B cell (primary cell): ENCODE measurements at regions of chr5 and their contacts with region 1.

Region 1: DNA sequence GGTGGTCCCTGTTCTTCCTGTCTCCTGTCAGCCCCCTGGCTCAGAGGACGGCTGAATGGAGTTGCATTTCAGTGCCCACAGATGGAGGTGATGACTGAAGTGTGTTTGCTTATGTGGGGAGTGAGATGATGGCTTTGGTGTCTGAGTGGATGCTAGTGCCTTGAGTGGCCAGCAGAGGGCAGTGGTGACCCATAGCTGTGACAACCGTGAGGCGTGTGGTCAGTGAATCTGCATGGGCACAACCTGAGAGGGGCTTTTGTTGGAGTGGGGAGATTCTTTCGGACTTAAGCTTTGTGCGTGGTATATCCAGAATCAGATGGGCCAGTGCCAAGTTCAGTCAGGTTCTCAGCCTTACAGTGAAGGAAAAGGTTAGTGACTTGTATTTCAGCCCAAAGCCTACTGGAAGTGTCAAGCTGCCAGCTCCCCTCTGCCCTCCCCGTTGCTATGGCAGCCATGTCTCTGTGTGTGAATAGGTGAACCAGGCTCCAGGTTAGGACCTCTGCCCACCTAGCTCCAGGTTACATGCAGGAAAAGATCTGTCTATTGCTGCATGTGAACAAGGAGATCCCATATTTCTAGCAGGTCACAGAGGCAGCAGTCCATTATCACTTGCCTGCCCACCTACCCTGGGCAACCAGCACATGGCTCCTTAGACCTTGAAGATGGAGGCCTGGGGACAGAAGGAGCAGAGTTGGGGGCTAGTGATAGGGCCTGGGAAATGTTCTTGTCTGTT is 14.7 kb upstream of the CXXC5 start:
- DNase-seq: peak; percentile 87
- ATAC-seq: peak; percentile 14
- H3K4me3 ChIP-seq: no peak overlapping the region
- H3K4me3 Mint-ChIP-seq: peak overlapping the region; percentile 17
- H3K27ac ChIP-seq: peak overlapping the region; percentile 88 to 93
- H3K27ac Mint-ChIP-seq: peak overlapping the region; percentile 61
- H3K4me1 ChIP-seq: peaks cover 44 to 59% of the 10 kb centered on the region in 2 donors
- H3K4me1 Mint-ChIP-seq: peaks cover 54% of the 10 kb centered on the region
- H3K27me3 ChIP-seq: no peaks in the 10 kb centered on the region
- H3K27me3 Mint-ChIP-seq: no peaks in the 10 kb centered on the region
- CTCF ChIP-seq: peak; percentile 96

Region 2: DNA sequence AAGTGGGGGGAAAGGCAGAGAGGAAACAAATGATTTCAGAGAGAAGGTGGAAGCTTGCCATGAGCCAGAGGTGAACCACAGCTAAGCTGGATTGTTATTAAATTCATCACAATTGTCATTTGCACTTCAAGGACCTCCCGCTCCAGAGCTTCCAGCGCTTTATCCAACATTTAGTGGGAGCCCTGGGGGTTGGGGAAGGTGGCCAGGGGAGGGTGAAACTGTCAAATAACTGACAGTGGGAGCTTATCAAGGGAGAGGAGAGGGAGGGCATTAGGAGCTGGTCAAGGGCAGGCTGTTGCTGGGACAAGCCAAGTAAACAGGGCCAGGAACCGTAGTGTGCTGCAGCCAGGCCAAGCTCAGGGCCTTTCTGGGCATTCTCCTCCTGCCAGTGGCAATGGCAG is 506.8 kb before region 1 on chr5:
- CTCF ChIA-PET with region 1: no interaction called
- POLR2A ChIA-PET with region 1: no interaction called
- intact Hi-C with region 1: no loop called
- DNase-seq: no peak
- ATAC-seq: no peak
- H3K4me3 ChIP-seq: no peak overlapping the region
- H3K4me3 Mint-ChIP-seq: no peak overlapping the region
- H3K27ac ChIP-seq: no peak overlapping the region
- H3K27ac Mint-ChIP-seq: no peak overlapping the region
- H3K4me1 ChIP-seq: no peaks in the 10 kb centered on the region
- H3K4me1 Mint-ChIP-seq: peaks cover 2% of the 10 kb centered on the region
- H3K27me3 ChIP-seq: no peaks in the 10 kb centered on the region
- H3K27me3 Mint-ChIP-seq: no peaks in the 10 kb centered on the region
- CTCF ChIP-seq: no peak

Region 3: DNA sequence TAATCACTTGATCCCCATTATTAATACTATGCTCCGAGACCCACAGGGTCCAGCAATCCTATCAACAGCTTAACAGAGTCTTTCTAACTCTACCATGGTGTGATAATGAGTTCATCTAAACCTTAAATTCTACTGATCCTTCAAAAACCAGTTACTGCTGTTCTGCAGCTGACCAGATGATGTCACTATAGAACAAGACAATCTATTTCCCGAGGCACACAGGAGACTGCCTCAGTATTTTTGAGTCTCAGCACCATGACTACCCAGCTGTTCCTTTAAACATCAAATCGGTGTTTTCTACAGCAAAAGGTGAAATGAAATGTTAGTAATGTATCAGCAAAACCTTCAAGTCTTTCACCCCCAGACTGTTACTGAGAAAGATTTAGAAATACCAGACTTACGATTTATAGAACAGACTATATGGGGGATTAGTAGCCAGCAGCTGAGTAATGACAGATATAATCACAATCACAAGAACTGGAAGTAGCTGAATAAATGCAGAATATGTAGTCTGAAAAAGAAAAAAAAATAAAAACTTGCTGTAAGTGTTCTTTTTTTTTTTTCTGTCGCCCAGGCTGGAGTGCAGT is 211.1 kb before region 1 on chr5:
- CTCF ChIA-PET with region 1: interaction called, 34 read pairs
- POLR2A ChIA-PET with region 1: interaction called, 4 read pairs
- intact Hi-C with region 1: no loop called
- DNase-seq: peak; percentile 80
- ATAC-seq: peak; percentile 95
- H3K4me3 ChIP-seq: no peak overlapping the region
- H3K4me3 Mint-ChIP-seq: no peak overlapping the region
- H3K27ac ChIP-seq: no peak overlapping the region
- H3K27ac Mint-ChIP-seq: peak overlapping the region; percentile 38
- H3K4me1 ChIP-seq: no peaks in the 10 kb centered on the region
- H3K4me1 Mint-ChIP-seq: peaks cover 2% of the 10 kb centered on the region
- H3K27me3 ChIP-seq: no peaks in the 10 kb centered on the region
- H3K27me3 Mint-ChIP-seq: no peaks in the 10 kb centered on the region
- CTCF ChIP-seq: peak; percentile 88

Region 4: GRCh38 chr5:139660923-139661814 is 27.7 kb after region 1 on chr5:
- CTCF ChIA-PET with region 1: interaction called, 215 read pairs
- POLR2A ChIA-PET with region 1: interaction called, 159 read pairs
- intact Hi-C with region 1: no loop called
- DNase-seq: peak; percentile 65
- ATAC-seq: peak; percentile 71
- H3K4me3 ChIP-seq: peak overlapping the region in 3 of 5 experiments; percentile 4 to 16 (median 15)
- H3K4me3 Mint-ChIP-seq: peak overlapping the region; percentile 86
- H3K27ac ChIP-seq: peak overlapping the region; percentile 43 to 90
- H3K27ac Mint-ChIP-seq: peak overlapping the region; percentile 99
- H3K4me1 ChIP-seq: peaks cover 98 to 100% of the 10 kb centered on the region in 2 donors
- H3K4me1 Mint-ChIP-seq: peaks cover 92% of the 10 kb centered on the region
- H3K27me3 ChIP-seq: no peaks in the 10 kb centered on the region
- H3K27me3 Mint-ChIP-seq: no peaks in the 10 kb centered on the region
- CTCF ChIP-seq: no peak

Region 5: GRCh38 chr5:139711067-139711905 is 77.8 kb after region 1 on chr5:
- CTCF ChIA-PET with region 1: interaction called, 105 read pairs
- POLR2A ChIA-PET with region 1: interaction called, 44 read pairs
- intact Hi-C with region 1: loop called (anchors 1 kb)
- DNase-seq: peak; percentile 77
- ATAC-seq: peak; percentile 51
- H3K4me3 ChIP-seq: peak overlapping the region; percentile 54 to 73 (median 60)
- H3K4me3 Mint-ChIP-seq: peak overlapping the region; percentile 90
- H3K27ac ChIP-seq: peak overlapping the region in 1 of 2 donors; percentile 75
- H3K27ac Mint-ChIP-seq: peak overlapping the region; percentile 81
- H3K4me1 ChIP-seq: peaks cover 27 to 37% of the 10 kb centered on the region in 2 donors
- H3K4me1 Mint-ChIP-seq: peaks cover 40% of the 10 kb centered on the region
- H3K27me3 ChIP-seq: peaks cover 0 to 5% (median 2%) of the 10 kb centered on the region in 4 experiments
- H3K27me3 Mint-ChIP-seq: no peaks in the 10 kb centered on the region
- CTCF ChIP-seq: no peak

Region 6: GRCh38 chr5:139765409-139766217 is 132.2 kb after region 1 on chr5:
- CTCF ChIA-PET with region 1: interaction called, 479 read pairs
- POLR2A ChIA-PET with region 1: interaction called, 22 read pairs
- intact Hi-C with region 1: loop called (anchors 1 kb)
- DNase-seq: peak; percentile 93
- ATAC-seq: peak; percentile 79
- H3K4me3 ChIP-seq: peak overlapping the region; percentile 17 to 66 (median 58)
- H3K4me3 Mint-ChIP-seq: peak overlapping the region; percentile 86
- H3K27ac ChIP-seq: no peak overlapping the region
- H3K27ac Mint-ChIP-seq: peak overlapping the region; percentile 82
- H3K4me1 ChIP-seq: peaks cover 24 to 26% of the 10 kb centered on the region in 2 donors
- H3K4me1 Mint-ChIP-seq: peaks cover 31% of the 10 kb centered on the region
- H3K27me3 ChIP-seq: peaks cover 0 to 14% (median 4%) of the 10 kb centered on the region in 4 experiments
- H3K27me3 Mint-ChIP-seq: peaks cover 7% of the 10 kb centered on the region
- CTCF ChIP-seq: peak; percentile 100

Region 7: DNA sequence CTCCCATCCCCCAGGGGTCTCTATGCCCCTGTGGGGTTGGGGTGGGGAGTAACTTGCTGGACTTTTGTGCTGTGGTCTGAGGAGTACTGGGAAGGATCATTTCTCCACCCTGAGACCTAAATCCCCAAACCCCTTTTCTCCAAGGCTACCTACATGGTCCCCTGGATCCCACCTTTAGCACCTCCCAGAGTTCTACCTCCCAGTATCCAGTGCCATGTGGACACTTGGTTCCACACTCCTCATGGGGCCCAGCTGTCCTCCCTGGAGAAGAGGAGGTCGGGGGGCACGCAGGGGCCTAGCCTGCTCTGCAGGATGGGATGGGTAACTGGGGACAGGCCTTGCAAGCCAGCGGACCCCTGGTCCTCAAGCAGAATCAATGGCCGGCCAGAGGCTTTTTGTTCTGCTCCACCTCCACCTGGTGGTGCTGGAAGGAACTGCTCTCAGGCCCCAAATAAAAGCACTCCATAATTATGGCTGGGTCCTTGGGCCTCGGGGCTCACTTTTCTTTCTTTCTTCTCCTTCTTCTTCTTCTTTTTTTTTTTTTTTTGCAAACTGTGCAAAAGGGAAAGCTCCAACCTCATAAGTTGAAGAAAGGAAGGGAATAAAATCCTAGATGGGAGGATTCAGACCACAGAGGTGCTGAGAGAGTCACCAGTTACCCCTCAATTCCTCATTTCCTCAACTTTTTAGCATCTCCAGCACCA is 230.5 kb after region 1 on chr5:
- CTCF ChIA-PET with region 1: no interaction called
- POLR2A ChIA-PET with region 1: no interaction called
- intact Hi-C with region 1: loop called (anchors 1 kb)
- DNase-seq: peak; percentile 73
- ATAC-seq: peak; percentile 85
- H3K4me3 ChIP-seq: no peak overlapping the region
- H3K4me3 Mint-ChIP-seq: no peak overlapping the region
- H3K27ac ChIP-seq: no peak overlapping the region
- H3K27ac Mint-ChIP-seq: no peak overlapping the region
- H3K4me1 ChIP-seq: peaks cover 0 to 3% of the 10 kb centered on the region in 2 donors
- H3K4me1 Mint-ChIP-seq: peaks cover 7% of the 10 kb centered on the region
- H3K27me3 ChIP-seq: peaks cover 0 to 6% (median 1%) of the 10 kb centered on the region in 4 experiments
- H3K27me3 Mint-ChIP-seq: peaks cover 23% of the 10 kb centered on the region
- CTCF ChIP-seq: peak; percentile 92

Region 8: DNA sequence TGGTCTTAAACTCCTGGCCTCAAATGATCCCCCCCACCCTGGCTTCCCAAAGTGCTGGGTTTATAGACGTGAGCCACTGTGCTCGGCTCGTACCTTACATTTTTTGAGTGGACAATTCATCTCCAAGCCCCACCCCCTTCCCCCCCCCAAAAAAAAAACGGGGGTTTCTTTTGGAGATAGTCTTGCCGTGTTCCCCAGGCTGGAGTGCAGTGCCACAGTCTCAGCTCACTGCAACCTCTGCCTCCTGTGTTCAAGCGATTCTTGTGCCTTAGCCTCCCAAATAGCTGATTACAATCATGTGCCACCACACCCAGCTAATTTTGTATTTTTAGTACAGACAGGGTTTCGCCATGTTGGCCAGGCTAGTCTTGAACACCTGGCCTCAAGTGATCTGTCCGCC is 799.5 kb after region 1 on chr5:
- CTCF ChIA-PET with region 1: no interaction called
- POLR2A ChIA-PET with region 1: no interaction called
- intact Hi-C with region 1: no loop called
- DNase-seq: no peak
- ATAC-seq: no peak
- H3K4me3 ChIP-seq: no peak overlapping the region
- H3K4me3 Mint-ChIP-seq: no peak overlapping the region
- H3K27ac ChIP-seq: no peak overlapping the region
- H3K27ac Mint-ChIP-seq: no peak overlapping the region
- H3K4me1 ChIP-seq: peaks cover 0 to 3% of the 10 kb centered on the region in 2 donors
- H3K4me1 Mint-ChIP-seq: peaks cover 20% of the 10 kb centered on the region
- H3K27me3 ChIP-seq: no peaks in the 10 kb centered on the region
- H3K27me3 Mint-ChIP-seq: no peaks in the 10 kb centered on the region
- CTCF ChIP-seq: no peak